Right cardiac atrium (tissue), 5 donors: ENCODE measurements at regions of chr1 and their contacts with region 1.

Region 1: GRCh38 chr1:150561974-150562445 is 12.8 kb downstream of the ADAMTSL4 start:
- DNase-seq: peak; percentile 96 to 98 (median 97)
- ATAC-seq: peak; percentile 88 to 89
- H3K4me3 ChIP-seq: peak overlapping the region; percentile 54
- H3K27ac ChIP-seq: peak overlapping the region; percentile 97
- H3K4me1 ChIP-seq: peaks cover 22% of the 10 kb centered on the region
- H3K27me3 ChIP-seq: no peaks in the 10 kb centered on the region

Region 2: DNA sequence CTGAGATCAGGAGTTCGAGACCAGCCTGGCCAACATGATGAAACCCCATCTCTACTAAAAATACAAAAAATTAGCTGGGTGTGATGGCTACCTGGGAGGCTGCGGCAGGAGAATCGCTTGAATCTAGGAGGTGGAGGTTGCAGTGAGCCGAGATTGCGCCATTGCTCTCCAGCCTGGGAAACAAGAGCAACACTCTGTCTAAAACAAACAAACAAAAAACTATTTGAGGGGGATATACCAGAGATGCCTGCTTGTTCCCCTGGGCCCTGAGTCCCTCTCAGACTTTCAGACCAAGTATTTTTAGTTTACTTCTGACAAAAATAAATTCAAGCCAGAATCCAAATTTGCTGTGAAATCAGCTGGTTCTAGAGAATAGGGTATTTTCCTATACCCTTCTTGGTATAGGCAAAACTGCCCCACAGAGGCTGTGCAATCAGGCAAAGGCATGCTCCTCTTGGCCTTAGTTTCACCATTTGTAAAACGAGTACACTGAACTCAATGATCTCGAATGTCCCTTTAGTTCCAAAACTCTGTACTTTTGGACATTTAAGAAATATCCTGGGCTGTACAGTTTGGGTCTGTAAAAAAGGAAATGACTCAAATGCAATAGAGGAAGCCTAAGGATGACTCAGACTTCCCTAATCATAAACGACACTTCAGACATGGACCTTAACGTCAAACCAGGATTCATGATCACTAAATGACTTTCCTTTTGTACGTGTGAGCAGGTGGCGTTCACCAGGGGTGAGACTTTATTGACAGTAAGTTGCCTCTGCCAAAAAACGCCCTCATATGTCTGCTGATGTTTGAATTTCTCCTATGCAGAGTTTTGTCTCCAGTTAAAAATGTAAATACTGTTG is 51.3 kb after region 1 on chr1:
- intact Hi-C with region 1: loop called in 1 of 4 experiments (anchors 2 kb)
- DNase-seq: no peak
- ATAC-seq: peak; percentile 70 to 77
- H3K4me3 ChIP-seq: peak overlapping the region; percentile 29
- H3K27ac ChIP-seq: peak overlapping the region; percentile 89
- H3K4me1 ChIP-seq: peaks cover 10% of the 10 kb centered on the region
- H3K27me3 ChIP-seq: no peaks in the 10 kb centered on the region

Region 3: DNA sequence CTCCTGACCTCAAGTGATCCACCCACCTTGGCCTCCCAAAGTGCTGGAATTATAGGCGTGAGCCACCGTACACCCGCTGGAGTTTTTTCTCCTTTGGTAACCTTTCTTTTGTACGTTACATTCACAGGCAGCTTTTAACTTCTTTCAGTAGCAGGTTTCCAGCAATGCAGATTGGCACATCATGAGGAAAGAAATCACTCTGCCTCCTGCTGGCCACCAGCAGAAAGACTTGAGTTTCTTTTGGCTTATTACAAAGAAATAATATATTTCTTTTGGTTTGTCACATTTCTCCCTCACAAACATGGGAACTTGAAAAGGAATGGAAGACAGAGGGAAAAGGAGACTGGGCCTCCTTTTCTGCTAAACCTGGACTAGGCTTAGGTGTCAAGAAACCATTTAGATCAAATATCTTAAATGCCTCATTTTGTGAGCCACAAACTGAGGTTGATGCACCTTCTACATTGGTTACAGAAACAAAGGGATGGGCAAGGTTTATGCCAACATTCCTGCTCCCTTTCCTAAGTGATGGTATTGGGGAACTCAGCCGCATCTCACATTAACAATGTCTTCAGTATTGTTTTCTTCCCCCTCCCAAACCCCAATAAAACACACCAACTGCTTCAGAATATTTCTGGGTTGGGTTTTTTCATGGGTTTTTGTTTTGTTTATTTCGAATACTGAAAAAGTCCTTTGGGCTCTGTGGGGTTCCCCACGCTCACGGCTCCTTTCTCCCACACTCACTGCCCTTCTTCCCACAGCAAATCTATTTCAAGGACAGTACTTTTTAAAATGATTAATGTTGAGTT is 59.7 kb after region 1 on chr1:
- intact Hi-C with region 1: loop called in 2 of 4 experiments (anchors 2 to 10 kb)
- DNase-seq: peak in 2 of 3 donors; percentile 37 to 73
- ATAC-seq: no peak
- H3K4me3 ChIP-seq: no peak overlapping the region
- H3K27ac ChIP-seq: peak overlapping the region; percentile 58
- H3K4me1 ChIP-seq: peaks cover 5% of the 10 kb centered on the region
- H3K27me3 ChIP-seq: no peaks in the 10 kb centered on the region

Region 4: DNA sequence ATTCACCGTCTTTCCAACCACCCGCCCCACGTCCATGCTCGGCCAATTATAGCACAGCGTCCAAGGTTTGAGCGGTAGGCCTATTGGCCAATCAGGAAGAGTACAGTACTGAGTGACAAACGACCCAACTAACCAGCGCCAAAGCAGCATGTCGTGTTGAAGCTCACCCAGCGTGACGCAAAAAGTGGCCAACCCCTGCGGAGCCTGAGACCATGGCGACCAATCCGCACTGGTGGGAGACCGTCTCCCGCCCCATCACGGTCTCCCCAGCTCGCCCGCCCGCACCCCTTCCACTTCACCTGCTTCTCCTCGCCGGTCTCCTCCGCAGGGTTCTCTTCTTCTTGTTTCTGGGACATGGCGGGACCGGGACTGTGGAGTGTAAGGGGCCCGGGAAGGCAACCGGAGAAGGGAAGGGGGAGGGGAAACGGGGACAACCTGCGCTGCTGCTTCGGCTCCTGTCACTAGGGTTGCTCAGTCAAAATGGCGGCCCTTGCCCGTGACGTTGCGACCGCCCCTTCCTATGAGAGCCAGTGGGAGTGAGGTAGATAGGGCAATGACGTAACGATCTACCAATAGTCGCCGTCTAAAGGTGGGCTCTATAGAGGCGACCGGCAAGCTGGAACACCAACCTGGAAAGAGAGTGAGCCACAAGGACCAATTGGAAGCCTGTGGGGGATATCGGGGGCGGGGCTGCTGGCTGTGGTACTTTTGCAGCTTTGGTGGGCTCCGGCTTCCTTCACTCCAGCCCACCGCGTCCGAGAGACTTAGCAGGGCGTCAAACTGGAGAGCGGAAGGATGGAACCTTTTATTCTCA is 67.3 kb after region 1 on chr1 and contains the start of gene ENSA:
- intact Hi-C with region 1: loop called in 1 of 4 experiments (anchors 10 kb)
- DNase-seq: peak; percentile 97 to 99 (median 98)
- ATAC-seq: peak; percentile 98 to 99
- H3K4me3 ChIP-seq: peak within 1 kb of the TSS; percentile 70
- H3K27ac ChIP-seq: peak within 1 kb of the TSS; percentile 95
- H3K4me1 ChIP-seq: peaks cover 2% of the 10 kb centered on the region
- H3K27me3 ChIP-seq: no peaks in the 10 kb centered on the region
- total RNA-seq, gene ENSA: 111 to 122 (median 118) TPM